AG04450 (cell line): ENCODE measurements at regions of chr13 and their contacts with region 1.

Region 1: GRCh38 chr13:50130123-50130946 is 115.1 kb downstream of the KCNRG start:
- DNase-seq: no peak
- H3K4me3 ChIP-seq: peak overlapping the region; percentile 53
- H3K27ac ChIP-seq: no peak overlapping the region
- H3K27me3 ChIP-seq: peaks cover 69% of the 10 kb centered on the region
- CTCF ChIP-seq: no peak

Region 2: DNA sequence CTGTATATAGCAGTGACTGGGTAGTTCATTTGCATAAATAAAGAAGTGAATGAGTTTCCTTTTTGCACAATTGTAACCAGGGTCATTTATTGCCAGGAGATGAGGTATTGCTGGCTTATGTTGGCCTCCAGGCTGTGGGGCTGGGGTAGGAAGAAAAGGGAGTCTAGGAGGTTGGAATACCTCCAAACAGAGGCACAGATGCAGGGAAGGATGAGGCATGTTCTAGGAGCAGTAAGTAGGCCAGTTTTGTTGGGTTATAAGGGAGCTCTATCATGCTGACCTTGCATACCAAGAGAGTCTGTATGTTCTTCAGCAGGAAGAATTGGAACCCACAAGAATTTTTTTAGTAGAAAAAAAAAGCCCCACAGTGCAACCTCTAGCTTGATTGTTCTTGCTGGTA is 1493.8 kb before region 1 on chr13:
- CTCF ChIA-PET with region 1: no interaction called
- POLR2A ChIA-PET with region 1: no interaction called
- DNase-seq: no peak
- H3K4me3 ChIP-seq: no peak overlapping the region
- H3K27ac ChIP-seq: no peak overlapping the region
- H3K27me3 ChIP-seq: peaks cover 3% of the 10 kb centered on the region
- CTCF ChIP-seq: no peak

Region 3: DNA sequence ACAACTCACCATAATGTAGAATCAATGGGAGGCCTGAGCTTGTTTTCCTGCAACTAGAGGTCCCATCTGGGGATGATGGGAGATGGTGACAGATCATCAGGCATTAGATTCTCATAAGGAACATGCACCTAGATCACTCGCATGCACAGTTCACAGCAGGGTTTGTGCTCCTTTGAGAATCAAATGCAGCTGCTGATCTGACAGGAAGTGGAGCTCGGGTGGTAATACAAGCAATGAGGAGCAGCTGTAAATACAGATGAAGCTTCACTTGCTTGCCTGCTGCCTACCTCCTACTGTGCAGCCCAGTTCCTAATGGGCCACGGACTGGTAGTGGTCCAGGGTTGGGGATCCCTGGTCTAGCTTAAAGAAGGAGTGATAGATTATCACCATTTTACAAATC is 370.8 kb before region 1 on chr13:
- CTCF ChIA-PET with region 1: no interaction called
- POLR2A ChIA-PET with region 1: interaction called, 10 read pairs
- DNase-seq: no peak
- H3K4me3 ChIP-seq: no peak overlapping the region
- H3K27ac ChIP-seq: no peak overlapping the region
- H3K27me3 ChIP-seq: no peaks in the 10 kb centered on the region
- CTCF ChIP-seq: no peak

Region 4: GRCh38 chr13:50236898-50237318 is 106.6 kb after region 1 on chr13:
- CTCF ChIA-PET with region 1: no interaction called
- POLR2A ChIA-PET with region 1: no interaction called
- DNase-seq: no peak
- H3K4me3 ChIP-seq: no peak overlapping the region
- H3K27ac ChIP-seq: no peak overlapping the region
- H3K27me3 ChIP-seq: peaks cover 15% of the 10 kb centered on the region
- CTCF ChIP-seq: no peak